Right ventricle myocardium inferior (tissue), 1 donor: ENCODE measurements at regions of chr18 and their contacts with region 1.

Region 1: DNA sequence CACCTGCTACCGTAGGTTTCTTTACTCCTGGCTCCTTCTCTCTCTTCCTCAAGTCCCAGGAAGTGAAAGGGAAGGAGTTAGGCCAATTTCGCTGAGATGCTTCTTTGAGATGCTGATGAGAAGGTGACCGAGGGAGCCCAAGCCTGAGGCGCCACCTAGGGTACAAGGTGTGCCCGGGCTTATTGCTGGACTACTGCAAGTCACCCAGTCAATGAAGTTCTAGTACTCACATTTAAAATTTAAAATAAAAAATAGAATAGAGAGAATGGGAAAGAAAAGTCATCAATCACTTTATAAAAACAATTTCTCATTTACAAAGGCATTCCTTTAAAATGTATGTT is 45.3 kb downstream of the ACAA2 start:
- DNase-seq: no peak
- ATAC-seq: peak; percentile 62

Region 2: GRCh38 chr18:49055754-49056172 is 712.3 kb before region 1 on chr18:
- intact Hi-C with region 1: no loop called
- DNase-seq: peak; percentile 85
- ATAC-seq: peak; percentile 83

Region 3: DNA sequence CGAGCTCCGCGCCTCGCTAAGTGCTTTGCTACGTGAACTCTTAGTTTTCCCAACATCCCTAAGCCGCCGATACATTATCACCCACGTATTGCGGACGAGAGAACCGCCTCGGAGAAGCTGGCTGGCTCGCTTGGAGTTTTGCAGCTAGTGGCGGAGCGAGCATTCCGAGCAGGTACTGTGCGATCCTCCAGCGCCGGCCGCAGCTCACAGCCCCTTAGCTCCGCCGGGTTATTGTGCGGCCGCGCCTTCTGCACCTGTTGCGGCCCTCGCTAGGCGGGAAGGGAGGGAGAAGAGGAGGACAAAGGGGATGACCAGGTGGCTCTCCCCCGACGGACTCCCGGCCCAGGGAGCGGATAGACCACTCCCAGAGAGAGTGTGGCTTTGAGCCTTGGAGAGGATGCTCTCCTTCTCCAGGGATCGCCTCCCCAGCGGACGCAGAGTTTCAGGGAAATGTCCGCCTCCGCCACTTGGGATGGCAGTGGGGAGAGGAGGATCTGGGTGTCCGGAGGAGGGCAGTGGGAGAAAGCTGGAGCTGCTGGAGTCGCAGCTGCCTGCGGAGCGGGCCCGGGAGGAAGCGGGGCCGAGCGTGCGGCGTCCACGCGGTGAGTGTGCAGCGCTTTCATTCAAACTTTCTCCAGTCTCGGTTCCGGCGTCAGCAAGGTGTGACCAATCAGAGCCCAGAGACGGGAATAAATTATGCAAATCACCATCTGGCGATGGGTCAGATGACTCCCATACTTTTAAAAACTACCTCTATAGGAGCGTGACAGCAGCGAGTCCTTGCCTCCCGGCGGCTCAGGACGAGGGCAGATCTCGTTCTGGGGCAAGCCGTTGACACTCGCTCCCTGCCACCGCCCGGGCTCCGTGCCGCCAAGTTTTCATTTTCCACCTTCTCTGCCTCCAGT is 206.5 kb before region 1 on chr18 and contains the start of gene LIPG:
- intact Hi-C with region 1: loop called (anchors 5 kb)
- DNase-seq: no peak
- ATAC-seq: peak; percentile 4
- total RNA-seq, gene LIPG: not detected

Region 4: GRCh38 chr18:49849331-49850217 is 81.6 kb after region 1 on chr18:
- intact Hi-C with region 1: loop called (anchors 10 kb)
- DNase-seq: no peak
- ATAC-seq: no peak